Transverse colon (tissue), 4 donors: ENCODE measurements at regions of chr5 and their contacts with region 1.

Region 1: DNA sequence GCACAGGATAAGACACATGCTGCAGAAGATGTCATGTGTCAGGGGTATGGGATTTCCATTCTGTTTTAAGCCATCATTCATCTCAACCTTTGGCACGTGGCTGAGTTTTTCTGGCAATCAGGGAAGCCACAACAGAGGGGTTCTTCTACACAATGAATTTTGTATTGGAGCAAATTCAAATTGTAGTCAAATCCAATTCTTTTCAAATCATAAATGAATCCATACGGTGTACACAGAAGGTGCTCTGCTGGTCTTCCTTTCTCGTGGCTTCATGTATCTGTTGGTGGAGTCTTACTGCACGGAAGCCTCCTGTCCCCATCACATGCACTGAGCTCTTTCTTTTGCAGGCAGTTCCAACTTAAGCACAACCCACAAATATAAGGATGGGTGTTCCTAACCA is 436.7 kb upstream of the DAP start:
- DNase-seq: no peak
- H3K4me3 ChIP-seq: no peak overlapping the region
- H3K27ac ChIP-seq: no peak overlapping the region
- H3K4me1 ChIP-seq: no peaks in the 10 kb centered on the region
- H3K27me3 ChIP-seq: no peaks in the 10 kb centered on the region
- CTCF ChIP-seq: no peak
- EP300 ChIP-seq: no peak
- POLR2A ChIP-seq: no peak

Region 2: DNA sequence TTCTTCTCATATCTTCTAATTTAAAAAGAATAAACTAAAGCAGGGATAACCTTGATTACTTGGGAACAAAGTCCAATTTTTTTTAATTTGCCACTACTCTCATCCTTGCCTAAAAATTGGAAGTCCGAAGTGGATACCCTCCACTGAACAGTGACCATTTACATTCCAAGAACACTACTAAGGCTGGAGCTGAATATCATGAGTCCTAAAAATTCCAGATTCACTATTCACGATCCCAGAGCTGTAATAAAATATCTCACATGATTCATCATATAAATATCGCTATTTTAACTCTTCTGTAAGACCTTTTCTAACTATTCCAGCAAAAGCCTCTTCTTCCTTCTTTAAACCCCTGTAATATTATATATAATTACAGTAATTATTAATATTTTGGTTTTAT is 1005.4 kb before region 1 on chr5:
- in situ Hi-C with region 1: no loop called
- intact Hi-C with region 1: loop called (anchors 5 kb)
- DNase-seq: no peak
- H3K4me3 ChIP-seq: no peak overlapping the region
- H3K27ac ChIP-seq: no peak overlapping the region
- H3K4me1 ChIP-seq: no peaks in the 10 kb centered on the region
- H3K27me3 ChIP-seq: no peaks in the 10 kb centered on the region
- CTCF ChIP-seq: no peak
- EP300 ChIP-seq: no peak
- POLR2A ChIP-seq: no peak

Region 3: DNA sequence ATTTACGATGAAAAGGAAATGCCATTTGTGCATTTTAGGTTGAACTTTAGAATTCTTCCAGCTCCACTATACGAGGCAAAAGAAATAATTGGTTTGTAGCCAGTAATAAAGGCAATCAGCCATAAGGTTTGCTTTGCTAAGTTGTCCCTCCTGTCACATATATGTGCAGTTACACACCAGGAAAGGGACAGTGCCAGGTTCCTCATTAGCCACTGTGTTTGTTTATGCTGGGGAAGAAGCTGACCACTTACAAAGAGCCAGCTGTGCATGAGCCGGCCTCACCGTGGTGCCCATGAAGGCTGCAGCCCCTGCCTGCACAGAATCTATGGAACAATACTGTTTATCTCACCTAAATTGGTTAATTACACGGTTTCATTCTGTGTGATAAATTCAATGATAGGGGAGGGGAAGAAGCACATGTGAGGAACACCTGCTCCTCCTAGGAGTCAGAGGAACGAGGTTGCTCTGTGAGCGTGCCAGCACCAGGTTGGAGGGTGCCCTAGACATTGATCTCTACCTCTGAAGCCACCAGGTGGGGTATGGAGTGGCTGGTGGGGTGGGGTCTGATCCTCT is 262.9 kb before region 1 on chr5:
- in situ Hi-C with region 1: no loop called
- intact Hi-C with region 1: no loop called
- DNase-seq: no peak
- H3K4me3 ChIP-seq: no peak overlapping the region
- H3K27ac ChIP-seq: no peak overlapping the region
- H3K4me1 ChIP-seq: no peaks in the 10 kb centered on the region
- H3K27me3 ChIP-seq: no peaks in the 10 kb centered on the region
- CTCF ChIP-seq: no peak
- EP300 ChIP-seq: no peak
- POLR2A ChIP-seq: no peak

Region 4: GRCh38 chr5:12861886-12862654 is 1664.3 kb after region 1 on chr5:
- in situ Hi-C with region 1: no loop called
- intact Hi-C with region 1: no loop called
- DNase-seq: no peak
- H3K4me3 ChIP-seq: no peak overlapping the region
- H3K27ac ChIP-seq: no peak overlapping the region
- H3K4me1 ChIP-seq: no peaks in the 10 kb centered on the region
- H3K27me3 ChIP-seq: no peaks in the 10 kb centered on the region
- CTCF ChIP-seq: no peak
- EP300 ChIP-seq: no peak
- POLR2A ChIP-seq: no peak